Natural killer cell (primary cell): ENCODE measurements at regions of chr9 and their contacts with region 1.

Region 1: DNA sequence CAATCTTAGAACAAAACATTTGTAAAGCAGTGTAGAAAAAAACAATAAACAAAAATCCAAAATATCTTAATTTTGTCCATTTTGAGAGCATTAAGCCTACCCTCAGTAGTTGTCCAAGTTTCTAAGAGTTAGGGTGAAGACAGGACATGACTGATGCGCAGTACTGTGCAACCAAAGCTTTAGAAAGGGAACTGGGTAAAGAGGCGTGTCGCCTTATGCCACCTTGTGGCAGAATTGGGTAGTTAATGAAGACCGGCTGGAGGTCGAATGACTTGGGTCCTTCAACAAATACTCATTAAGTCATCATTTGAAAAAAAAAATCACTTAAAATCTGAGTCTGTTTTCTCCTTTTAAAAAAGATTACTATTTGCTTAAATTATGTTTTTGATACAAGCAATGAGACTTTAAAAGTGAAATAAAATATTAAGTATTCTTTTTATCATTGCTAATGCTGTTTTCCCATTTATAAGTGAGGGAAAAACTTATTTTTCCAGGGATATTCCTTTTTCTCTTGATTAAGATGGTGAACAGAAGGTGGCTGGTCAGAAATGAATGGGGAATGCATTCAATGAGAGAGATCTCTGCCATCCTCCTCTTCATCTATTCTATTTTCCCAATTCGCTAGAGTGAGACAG is 3.5 kb upstream of the RNF20 start:
- DNase-seq: peak; percentile 40 to 84
- ATAC-seq: peak; percentile 30 to 59 (median 41)
- H3K4me3 ChIP-seq: no peak overlapping the region
- H3K4me3 Mint-ChIP-seq: no peak overlapping the region
- H3K27ac ChIP-seq: no peak overlapping the region
- H3K27ac Mint-ChIP-seq: no peak overlapping the region
- H3K4me1 ChIP-seq: peaks cover 15% of the 10 kb centered on the region
- H3K4me1 Mint-ChIP-seq: peaks cover 6 to 11% of the 10 kb centered on the region in 2 donors
- H3K27me3 ChIP-seq: no peaks in the 10 kb centered on the region
- H3K27me3 Mint-ChIP-seq: peaks cover 4 to 7% of the 10 kb centered on the region in 2 donors
- CTCF ChIP-seq: peak; percentile 94

Region 2: GRCh38 chr9:100714372-100715099 is 815.7 kb before region 1 on chr9:
- intact Hi-C with region 1: loop called (anchors 10 kb)
- DNase-seq: peak in 1 of 2 donors; percentile 41
- ATAC-seq: no peak
- H3K4me3 ChIP-seq: no peak overlapping the region
- H3K4me3 Mint-ChIP-seq: no peak overlapping the region
- H3K27ac ChIP-seq: no peak overlapping the region
- H3K27ac Mint-ChIP-seq: no peak overlapping the region
- H3K4me1 ChIP-seq: no peaks in the 10 kb centered on the region
- H3K4me1 Mint-ChIP-seq: no peaks in the 10 kb centered on the region
- H3K27me3 ChIP-seq: no peaks in the 10 kb centered on the region
- H3K27me3 Mint-ChIP-seq: no peaks in the 10 kb centered on the region
- CTCF ChIP-seq: peak; percentile 50

Region 3: DNA sequence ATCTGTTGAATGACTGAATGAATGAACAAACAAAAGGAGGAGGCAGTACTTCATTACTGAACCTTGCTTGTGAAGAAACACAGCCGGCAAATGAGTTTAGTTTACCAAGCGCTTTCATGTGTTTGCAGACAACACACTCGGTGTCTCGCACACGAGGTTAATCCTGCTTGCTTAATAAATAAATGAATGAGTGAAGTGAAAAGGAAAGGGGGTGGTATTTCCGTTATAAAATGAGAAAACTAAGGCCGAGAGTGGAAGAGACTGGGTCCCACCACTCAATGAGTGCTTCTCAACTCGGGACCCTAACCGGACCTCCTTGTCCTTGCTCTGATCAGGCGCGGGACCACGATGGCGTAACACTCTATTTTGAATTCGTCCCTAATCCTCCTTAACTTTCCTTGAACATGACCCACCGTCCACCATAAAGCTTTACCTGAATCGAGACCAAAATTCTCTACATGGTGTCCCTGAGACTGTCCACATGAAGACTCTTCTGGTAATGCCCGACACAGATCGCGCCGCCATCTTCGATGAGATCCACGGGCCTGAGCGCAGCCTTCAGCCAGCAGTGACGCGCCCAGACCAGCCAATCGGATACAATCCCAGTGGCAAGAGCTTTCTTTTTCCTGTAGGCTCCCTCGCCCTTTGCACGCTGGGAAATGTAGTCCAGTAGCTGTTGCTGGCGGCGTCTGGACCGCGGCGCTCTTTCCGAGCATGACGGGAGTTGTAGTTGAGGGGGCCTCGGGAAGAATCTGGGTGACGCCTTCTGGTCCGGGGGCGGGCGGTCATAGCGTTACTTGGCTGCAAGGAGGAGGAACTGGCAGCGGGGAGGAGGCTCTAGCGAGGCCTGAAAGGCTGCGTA is 131.9 kb before region 1 on chr9 and contains the starts of genes MRPL50 and ZNF189:
- intact Hi-C with region 1: loop called (anchors 1 kb)
- DNase-seq: peak; percentile 93 to 98
- ATAC-seq: peak; percentile 93 to 99 (median 95)
- H3K4me3 ChIP-seq: peak within 1 kb of the TSS; percentile 77
- H3K4me3 Mint-ChIP-seq: peak within 1 kb of the TSS; percentile 96
- H3K27ac ChIP-seq: peak within 1 kb of the TSS; percentile 93
- H3K27ac Mint-ChIP-seq: peak within 1 kb of the TSS; percentile 98 to 99
- H3K4me1 ChIP-seq: peaks cover 12% of the 10 kb centered on the region
- H3K4me1 Mint-ChIP-seq: peaks cover 73 to 76% of the 10 kb centered on the region in 2 donors
- H3K27me3 ChIP-seq: no peaks in the 10 kb centered on the region
- H3K27me3 Mint-ChIP-seq: no peaks in the 10 kb centered on the region
- CTCF ChIP-seq: no peak
- total RNA-seq, gene MRPL50: 4.4 to 5.9 (median 5.1) TPM
- total RNA-seq, gene ZNF189: 6.7 to 11.3 (median 8.7) TPM

Region 4: DNA sequence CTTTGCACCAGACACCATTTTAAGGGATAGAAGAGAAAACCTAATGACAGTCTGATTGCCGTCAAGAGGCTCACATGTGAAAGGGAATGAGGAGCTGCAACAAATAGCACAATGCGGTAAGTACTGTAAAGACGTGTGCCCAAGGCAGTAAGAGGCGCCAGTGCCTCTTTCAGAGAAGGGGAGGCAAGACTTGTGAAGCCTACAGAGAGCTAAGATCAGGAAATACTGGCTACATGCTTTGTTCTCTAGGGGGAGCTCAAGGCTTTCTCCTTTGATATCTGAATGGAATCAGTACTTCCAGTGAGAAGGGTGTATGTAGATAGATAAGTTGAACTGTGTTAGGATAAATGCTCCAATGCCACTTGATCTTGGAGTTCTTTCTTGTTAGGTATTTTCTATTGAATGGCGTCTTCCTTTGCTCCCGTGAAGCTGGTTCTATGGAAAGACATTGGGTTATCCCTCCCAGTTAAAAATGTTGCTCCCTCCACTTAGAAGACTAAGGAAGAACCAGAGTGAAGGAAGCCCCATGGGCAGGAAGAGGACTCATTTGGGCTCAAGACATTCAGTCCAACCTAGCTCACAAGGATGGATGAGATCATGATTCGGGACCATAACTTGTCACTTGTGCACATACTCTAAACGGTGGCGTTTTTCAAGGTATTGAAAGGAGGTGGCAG is 71.1 kb before region 1 on chr9:
- intact Hi-C with region 1: loop called (anchors 1 kb)
- DNase-seq: peak in 1 of 2 donors; percentile 60
- ATAC-seq: peak in 2 of 3 donors; percentile 49
- H3K4me3 ChIP-seq: no peak overlapping the region
- H3K4me3 Mint-ChIP-seq: no peak overlapping the region
- H3K27ac ChIP-seq: no peak overlapping the region
- H3K27ac Mint-ChIP-seq: no peak overlapping the region
- H3K4me1 ChIP-seq: no peaks in the 10 kb centered on the region
- H3K4me1 Mint-ChIP-seq: no peaks in the 10 kb centered on the region
- H3K27me3 ChIP-seq: peaks cover 3% of the 10 kb centered on the region
- H3K27me3 Mint-ChIP-seq: peaks cover 11 to 15% of the 10 kb centered on the region in 2 donors
- CTCF ChIP-seq: peak; percentile 14